GM12878 (cell line): ENCODE measurements at regions of chr1 and their contacts with region 1.

Region 1: GRCh38 chr1:40257688-40258444 is at the start of gene ZMPSTE24:
- DNase-seq: peak; percentile 87
- ATAC-seq: peak; percentile 98
- H3K4me3 ChIP-seq: peak within 1 kb of the TSS; percentile 84
- H3K27ac ChIP-seq: peak within 1 kb of the TSS; percentile 99
- H3K4me1 ChIP-seq: peaks cover 8% of the 10 kb centered on the region; the same call in 1 of the 2 replicates
- H3K27me3 ChIP-seq: no peaks in the 10 kb centered on the region
- CTCF ChIP-seq: no peak
- EP300 ChIP-seq: 0 out of 4 replicates have a peak, but pooled peaks of 1 of the 2 experiments have one; percentile 51
- POLR2A ChIP-seq: peak; percentile 90
- RAD21 ChIP-seq: peak; percentile 22; the same call in 1 of the 2 replicates
- polyA plus RNA-seq, gene ZMPSTE24: 30.1 to 56.0 TPM

Region 2: DNA sequence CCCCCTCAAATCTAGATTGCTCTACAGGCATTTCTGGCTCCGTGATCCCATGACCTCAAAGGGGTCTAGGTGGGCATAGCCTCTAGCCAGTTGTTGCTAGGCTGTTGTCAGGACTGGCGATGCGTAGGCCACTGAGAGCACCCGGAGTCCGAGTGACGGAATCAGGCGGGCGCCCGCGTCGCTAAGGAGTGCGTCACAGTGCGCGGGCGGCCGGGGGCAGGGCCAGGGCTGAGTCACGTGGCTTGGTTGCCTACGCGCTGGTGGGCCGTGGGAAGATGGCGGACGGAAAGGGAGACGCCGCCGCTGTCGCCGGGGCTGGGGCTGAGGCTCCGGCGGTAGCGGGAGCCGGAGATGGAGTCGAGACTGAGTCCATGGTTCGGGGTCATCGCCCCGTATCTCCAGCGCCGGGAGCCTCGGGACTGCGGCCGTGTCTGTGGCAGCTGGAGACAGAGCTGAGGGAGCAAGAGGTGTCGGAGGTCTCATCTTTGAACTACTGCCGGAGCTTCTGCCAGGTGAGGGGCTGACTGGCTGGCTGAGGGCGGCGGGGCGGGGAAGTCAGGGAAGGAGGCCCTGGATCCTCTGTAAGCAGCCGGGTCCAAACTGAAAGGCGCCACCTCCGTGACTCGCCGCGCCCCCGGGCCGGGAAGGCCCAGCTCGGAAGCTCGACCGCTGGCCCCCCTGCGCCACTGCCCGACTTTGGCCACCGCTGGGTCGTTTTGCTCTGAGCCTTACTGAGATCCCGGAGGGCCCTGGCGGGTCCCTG is 96.6 kb before region 1 on chr1 and contains the start of gene RLF:
- CTCF ChIA-PET with region 1: interaction called, 4 read pairs
- POLR2A ChIA-PET with region 1: no interaction called
- RAD21 ChIA-PET with region 1: interaction called, 3 read pairs
- SMC1A ChIA-PET with region 1: interaction called, 6 read pairs
- in situ Hi-C with region 1: no loop called
- intact Hi-C with region 1: loop called (anchors 2 kb)
- DNase-seq: peak; percentile 67
- ATAC-seq: peak; percentile 92
- H3K4me3 ChIP-seq: peak within 1 kb of the TSS; percentile 97
- H3K27ac ChIP-seq: peak within 1 kb of the TSS; percentile 93
- H3K4me1 ChIP-seq: no peaks in the 10 kb centered on the region
- H3K27me3 ChIP-seq: no peaks in the 10 kb centered on the region
- CTCF ChIP-seq: no peak
- EP300 ChIP-seq: no peak; a peak in 1 of 4 replicates
- POLR2A ChIP-seq: peak; percentile 99
- RAD21 ChIP-seq: no peak
- polyA plus RNA-seq, gene RLF: 2.0 to 3.6 TPM

Region 3: DNA sequence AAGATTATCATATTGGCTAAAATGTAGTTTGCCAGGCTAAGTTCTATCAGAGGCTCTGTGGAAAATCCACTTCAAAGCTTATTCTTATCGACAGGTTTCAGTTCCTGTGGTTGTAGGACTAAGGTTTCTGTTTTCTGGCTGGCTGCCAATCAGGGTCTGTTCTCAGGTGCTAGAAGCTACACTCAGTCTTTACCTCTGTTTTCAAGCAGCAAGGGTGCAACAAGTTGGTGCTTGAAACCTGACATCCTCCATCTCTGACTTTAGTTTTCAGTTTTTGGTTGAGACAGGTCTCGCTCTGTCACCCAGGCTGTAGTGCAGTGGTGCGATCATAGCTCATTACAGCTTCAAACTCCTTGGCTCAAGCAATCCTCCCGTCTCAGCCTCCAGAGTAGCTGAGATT is 25.4 kb before region 1 on chr1:
- CTCF ChIA-PET with region 1: interaction called, 3 read pairs
- POLR2A ChIA-PET with region 1: no interaction called
- RAD21 ChIA-PET with region 1: interaction called, 5 read pairs
- SMC1A ChIA-PET with region 1: interaction called, 4 read pairs
- in situ Hi-C with region 1: no loop called
- intact Hi-C with region 1: loop called (anchors 2 kb)
- DNase-seq: peak; percentile 94
- ATAC-seq: peak; percentile 99
- H3K4me3 ChIP-seq: no peak overlapping the region
- H3K27ac ChIP-seq: peak overlapping the region; percentile 36
- H3K4me1 ChIP-seq: peaks cover 32% of the 10 kb centered on the region
- H3K27me3 ChIP-seq: no peaks in the 10 kb centered on the region
- CTCF ChIP-seq: no peak
- EP300 ChIP-seq: peak in 1 of 2 experiments; percentile 34; a peak in 1 of 4 replicates
- POLR2A ChIP-seq: no peak
- RAD21 ChIP-seq: no peak

Region 4: DNA sequence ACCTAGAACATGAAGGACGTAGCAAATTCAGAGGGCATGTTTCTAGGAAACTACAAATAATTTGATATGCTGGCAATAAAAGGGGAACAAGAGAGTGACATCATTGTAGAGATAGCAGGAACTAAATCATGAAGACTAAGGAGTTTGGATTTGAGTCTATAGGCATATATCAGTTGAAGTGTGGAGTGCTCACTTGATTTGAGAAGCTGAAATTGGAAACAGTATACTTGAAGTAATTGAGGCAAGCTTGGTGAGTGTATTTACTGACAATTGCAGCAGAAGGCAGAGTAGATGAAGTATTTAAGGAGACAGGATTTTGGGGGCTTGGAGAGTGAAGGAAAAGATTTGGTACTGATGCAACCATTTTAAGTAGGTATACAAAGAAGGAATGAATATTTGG is 16.5 kb before region 1 on chr1:
- CTCF ChIA-PET with region 1: interaction called, 9 read pairs
- POLR2A ChIA-PET with region 1: interaction called, 16 read pairs
- RAD21 ChIA-PET with region 1: interaction called, 11 read pairs
- SMC1A ChIA-PET with region 1: interaction called, 9 read pairs
- in situ Hi-C with region 1: no loop called
- intact Hi-C with region 1: no loop called
- DNase-seq: no peak
- ATAC-seq: peak; percentile 41
- H3K4me3 ChIP-seq: no peak overlapping the region
- H3K27ac ChIP-seq: peak overlapping the region; percentile 60
- H3K4me1 ChIP-seq: peaks cover 13% of the 10 kb centered on the region
- H3K27me3 ChIP-seq: no peaks in the 10 kb centered on the region
- CTCF ChIP-seq: no peak
- EP300 ChIP-seq: no peak
- POLR2A ChIP-seq: no peak
- RAD21 ChIP-seq: no peak

Region 5: GRCh38 chr1:40299366-40300248 is 41.7 kb after region 1 on chr1:
- CTCF ChIA-PET with region 1: no interaction called
- POLR2A ChIA-PET with region 1: interaction called, 11 read pairs
- RAD21 ChIA-PET with region 1: no interaction called
- SMC1A ChIA-PET with region 1: no interaction called
- in situ Hi-C with region 1: no loop called
- intact Hi-C with region 1: no loop called
- DNase-seq: no peak
- ATAC-seq: peak; percentile 15; the same call in 2 of the 3 replicates
- H3K4me3 ChIP-seq: no peak overlapping the region
- H3K27ac ChIP-seq: no peak overlapping the region
- H3K4me1 ChIP-seq: no peaks in the 10 kb centered on the region
- H3K27me3 ChIP-seq: no peaks in the 10 kb centered on the region
- CTCF ChIP-seq: no peak
- EP300 ChIP-seq: no peak
- POLR2A ChIP-seq: 0 out of 2 replicates have a peak, but pooled peaks have one; percentile 34
- RAD21 ChIP-seq: no peak

Region 6: DNA sequence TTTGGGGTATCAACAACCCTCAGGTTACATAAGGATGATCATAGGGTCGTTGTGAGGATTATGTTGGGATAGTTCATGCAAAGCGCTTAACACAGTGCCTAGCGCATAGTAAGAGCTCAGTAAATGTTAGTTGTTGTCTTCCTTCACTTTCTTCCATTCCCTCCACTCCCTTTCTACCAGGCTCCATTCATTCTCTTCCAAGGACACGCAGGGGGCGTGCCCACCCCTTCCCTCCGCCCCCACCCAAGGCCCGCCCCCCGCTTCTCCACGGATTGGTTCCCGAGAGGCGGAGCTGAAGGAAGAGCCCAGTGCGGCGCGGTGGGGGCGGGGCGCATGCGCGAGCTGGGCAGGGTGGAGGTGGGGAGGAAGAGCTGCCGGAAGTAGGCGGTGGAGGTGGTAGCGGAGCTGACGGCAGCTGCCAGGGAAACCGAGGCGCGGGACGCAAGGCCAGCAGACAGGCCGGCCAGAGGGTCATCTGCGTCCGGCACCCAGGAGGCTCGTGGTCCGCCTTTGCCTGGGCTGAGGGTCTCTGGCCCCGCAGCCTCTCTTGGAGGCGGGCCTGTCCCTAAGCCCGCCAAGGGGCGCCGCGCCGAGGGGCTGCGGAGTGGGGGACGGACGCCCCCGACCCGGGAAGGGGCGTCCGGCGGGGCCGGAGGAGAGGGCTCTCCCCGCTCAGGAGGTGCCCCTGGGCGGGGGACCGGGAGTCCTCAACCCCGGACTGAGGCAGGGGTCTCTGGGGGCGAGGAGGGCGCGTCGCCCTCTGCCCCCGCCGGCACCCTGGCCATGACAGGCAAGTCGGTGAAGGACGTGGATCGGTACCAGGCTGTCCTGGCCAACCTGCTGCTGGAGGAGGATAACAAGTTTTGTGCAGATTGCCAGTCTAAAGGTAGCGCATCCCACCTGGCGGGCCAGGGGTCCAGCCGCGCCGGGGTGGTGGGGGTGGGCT is 115.7 kb after region 1 on chr1 and contains the start of gene SMAP2:
- CTCF ChIA-PET with region 1: no interaction called
- POLR2A ChIA-PET with region 1: no interaction called
- RAD21 ChIA-PET with region 1: no interaction called
- SMC1A ChIA-PET with region 1: no interaction called
- in situ Hi-C with region 1: no loop called
- intact Hi-C with region 1: no loop called
- DNase-seq: peak; percentile 85
- ATAC-seq: peak; percentile 87
- H3K4me3 ChIP-seq: peak within 1 kb of the TSS; percentile 86
- H3K27ac ChIP-seq: peak within 1 kb of the TSS; percentile 94
- H3K4me1 ChIP-seq: peaks cover 9% of the 10 kb centered on the region
- H3K27me3 ChIP-seq: no peaks in the 10 kb centered on the region
- CTCF ChIP-seq: no peak
- EP300 ChIP-seq: no peak
- POLR2A ChIP-seq: peak; percentile 89
- RAD21 ChIP-seq: no peak
- polyA plus RNA-seq, gene SMAP2: 33.4 to 42.4 TPM